ENCODE measurements at regions of chr7 and their contacts with region 1.

Region 1: GRCh38 chr7:79298145-79298760 is 155.2 kb downstream of the MAGI2 start:
- DNase-seq: peak; percentile 75
- H3K4me3 ChIP-seq: no peak overlapping the region
- H3K27ac ChIP-seq: no peak overlapping the region
- H3K4me1 ChIP-seq: no peaks in the 10 kb centered on the region
- H3K27me3 ChIP-seq: no peaks in the 10 kb centered on the region
- CTCF ChIP-seq: peak; percentile 41 to 56
- POLR2A ChIP-seq: no peak

Region 2: GRCh38 chr7:79272066-79272669 is 26.1 kb before region 1 on chr7:
- CTCF ChIA-PET with region 1: interaction called, 10 read pairs
- POLR2A ChIA-PET with region 1: no interaction called
- dilution Hi-C with region 1: no loop called
- intact Hi-C with region 1: no loop called
- DNase-seq: peak; percentile 55
- H3K4me3 ChIP-seq: no peak overlapping the region
- H3K27ac ChIP-seq: no peak overlapping the region
- H3K4me1 ChIP-seq: peaks cover 7% of the 10 kb centered on the region
- H3K27me3 ChIP-seq: no peaks in the 10 kb centered on the region
- CTCF ChIP-seq: peak; percentile 41 to 45
- POLR2A ChIP-seq: no peak

Region 3: DNA sequence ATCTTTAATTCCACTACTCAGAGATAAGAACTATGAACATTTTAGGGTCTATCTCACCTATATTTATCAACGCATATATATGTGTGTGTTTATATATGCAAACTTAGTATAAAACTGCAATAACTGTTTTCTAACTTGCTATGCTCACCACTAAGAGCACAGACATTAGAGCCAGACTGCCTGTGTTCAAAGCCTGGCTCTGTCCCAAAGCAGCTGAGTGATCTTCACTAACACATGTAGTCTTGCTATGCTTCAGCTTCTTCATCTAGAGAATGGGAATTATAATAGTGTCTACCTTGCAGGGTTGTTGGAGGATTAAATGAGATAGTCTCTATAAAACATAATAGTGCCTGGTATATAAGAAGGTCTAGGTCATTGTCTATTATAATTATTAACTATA is 10.3 kb before region 1 on chr7:
- CTCF ChIA-PET with region 1: interaction called, 40 read pairs
- POLR2A ChIA-PET with region 1: no interaction called
- dilution Hi-C with region 1: no loop called
- intact Hi-C with region 1: no loop called
- DNase-seq: no peak
- H3K4me3 ChIP-seq: no peak overlapping the region
- H3K27ac ChIP-seq: no peak overlapping the region
- H3K4me1 ChIP-seq: peaks cover 14% of the 10 kb centered on the region
- H3K27me3 ChIP-seq: no peaks in the 10 kb centered on the region
- CTCF ChIP-seq: no peak
- POLR2A ChIP-seq: no peak

Region 4: GRCh38 chr7:79452032-79452494 is 153.8 kb after region 1 on chr7:
- CTCF ChIA-PET with region 1: interaction called, 33 read pairs
- POLR2A ChIA-PET with region 1: no interaction called
- dilution Hi-C with region 1: no loop called
- intact Hi-C with region 1: loop called (anchors 1 kb)
- DNase-seq: peak; percentile 88
- H3K4me3 ChIP-seq: peak overlapping the region; percentile 78 to 84 (median 82)
- H3K27ac ChIP-seq: peak overlapping the region; percentile 78
- H3K4me1 ChIP-seq: peaks cover 19% of the 10 kb centered on the region
- H3K27me3 ChIP-seq: no peaks in the 10 kb centered on the region
- CTCF ChIP-seq: no peak
- POLR2A ChIP-seq: peak; percentile 74

Region 5: GRCh38 chr7:79702116-79702515 is 403.9 kb after region 1 on chr7:
- CTCF ChIA-PET with region 1: no interaction called
- POLR2A ChIA-PET with region 1: no interaction called
- dilution Hi-C with region 1: no loop called
- intact Hi-C with region 1: no loop called
- DNase-seq: no peak
- H3K4me3 ChIP-seq: no peak overlapping the region
- H3K27ac ChIP-seq: no peak overlapping the region
- H3K4me1 ChIP-seq: no peaks in the 10 kb centered on the region
- H3K27me3 ChIP-seq: no peaks in the 10 kb centered on the region
- CTCF ChIP-seq: no peak
- POLR2A ChIP-seq: no peak

Region 6: DNA sequence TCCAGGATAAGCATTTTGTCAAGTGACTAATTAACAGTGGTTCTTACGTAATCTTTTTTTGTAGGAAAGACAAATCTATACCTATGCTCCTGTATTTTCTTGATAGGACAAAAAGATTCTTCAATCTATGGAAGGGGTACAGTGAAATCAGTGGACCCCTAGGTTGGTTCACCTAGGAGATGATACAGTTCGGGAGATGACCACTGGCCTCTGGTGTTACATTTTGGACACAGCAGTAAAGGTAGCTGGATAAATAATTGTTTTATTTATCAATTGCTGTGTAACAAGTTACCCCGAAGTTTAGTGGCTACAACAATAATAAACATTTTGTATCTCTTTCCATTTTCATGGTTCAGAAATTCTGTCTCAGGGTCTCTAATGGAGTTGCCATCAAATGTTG is 443.4 kb after region 1 on chr7:
- CTCF ChIA-PET with region 1: interaction called, 60 read pairs
- POLR2A ChIA-PET with region 1: interaction called, 4 read pairs
- dilution Hi-C with region 1: no loop called
- intact Hi-C with region 1: loop called (anchors 1 kb)
- DNase-seq: peak; percentile 32
- H3K4me3 ChIP-seq: no peak overlapping the region
- H3K27ac ChIP-seq: no peak overlapping the region
- H3K4me1 ChIP-seq: no peaks in the 10 kb centered on the region
- H3K27me3 ChIP-seq: no peaks in the 10 kb centered on the region
- CTCF ChIP-seq: peak in 1 of 2 donors; percentile 33
- POLR2A ChIP-seq: no peak

Region 7: GRCh38 chr7:80018941-80019752 is 720.9 kb after region 1 on chr7:
- CTCF ChIA-PET with region 1: interaction called, 24 read pairs
- POLR2A ChIA-PET with region 1: no interaction called
- dilution Hi-C with region 1: no loop called
- intact Hi-C with region 1: loop called (anchors 1 kb)
- DNase-seq: peak; percentile 55
- H3K4me3 ChIP-seq: no peak overlapping the region
- H3K27ac ChIP-seq: no peak overlapping the region
- H3K4me1 ChIP-seq: no peaks in the 10 kb centered on the region
- H3K27me3 ChIP-seq: no peaks in the 10 kb centered on the region
- CTCF ChIP-seq: peak; percentile 75 to 78
- POLR2A ChIP-seq: no peak

Region 8: DNA sequence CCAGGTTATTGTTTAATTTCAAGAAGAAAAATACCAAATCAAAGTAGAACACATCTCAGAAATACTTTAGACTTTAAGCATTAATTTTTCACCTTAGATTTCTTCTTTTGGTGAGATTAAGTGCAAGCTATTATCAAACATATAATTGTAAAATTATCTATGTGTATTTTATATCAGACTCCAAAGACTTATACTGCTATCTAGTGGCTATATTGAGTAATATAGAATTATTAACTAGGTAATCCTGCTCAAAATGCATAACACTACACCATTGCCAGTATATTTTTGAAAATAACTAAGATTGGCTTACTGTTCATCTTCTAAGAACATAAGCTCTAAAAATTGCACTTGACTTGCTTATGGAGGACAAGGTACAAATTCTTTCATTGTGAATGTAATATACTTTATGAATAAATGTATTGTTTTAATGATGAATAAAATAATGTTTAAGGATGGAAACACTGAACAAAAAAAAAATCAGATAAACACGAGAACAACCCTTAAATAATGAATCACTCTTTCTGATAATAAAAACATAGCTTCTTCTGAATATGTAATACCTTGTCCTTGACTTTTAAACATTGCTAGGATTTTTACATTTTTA is 749.7 kb after region 1 on chr7:
- CTCF ChIA-PET with region 1: interaction called, 131 read pairs
- POLR2A ChIA-PET with region 1: no interaction called
- dilution Hi-C with region 1: no loop called
- intact Hi-C with region 1: no loop called
- DNase-seq: no peak
- H3K4me3 ChIP-seq: no peak overlapping the region
- H3K27ac ChIP-seq: no peak overlapping the region
- H3K4me1 ChIP-seq: no peaks in the 10 kb centered on the region
- H3K27me3 ChIP-seq: no peaks in the 10 kb centered on the region
- CTCF ChIP-seq: no peak
- POLR2A ChIP-seq: no peak